ENCODE measurements at regions of chr22 and their contacts with region 1.

Region 1: GRCh38 chr22:17258015-17258787 is 39.0 kb upstream of the ADA2 start:
- DNase-seq: peak; percentile 98
- ATAC-seq: peak; percentile 96
- H3K4me3 ChIP-seq: 0 out of 2 replicates have a peak overlapping the region, but pooled peaks have one; percentile 28
- H3K27ac ChIP-seq: peak overlapping the region; percentile 81
- H3K4me1 ChIP-seq: peaks cover 24% of the 10 kb centered on the region
- H3K27me3 ChIP-seq: no peaks in the 10 kb centered on the region
- CTCF ChIP-seq: no peak
- EP300 ChIP-seq: peak; percentile 83 to 92
- POLR2A ChIP-seq: no peak
- RAD21 ChIP-seq: peak; percentile 6; the same call in 1 of the 2 replicates

Region 2: DNA sequence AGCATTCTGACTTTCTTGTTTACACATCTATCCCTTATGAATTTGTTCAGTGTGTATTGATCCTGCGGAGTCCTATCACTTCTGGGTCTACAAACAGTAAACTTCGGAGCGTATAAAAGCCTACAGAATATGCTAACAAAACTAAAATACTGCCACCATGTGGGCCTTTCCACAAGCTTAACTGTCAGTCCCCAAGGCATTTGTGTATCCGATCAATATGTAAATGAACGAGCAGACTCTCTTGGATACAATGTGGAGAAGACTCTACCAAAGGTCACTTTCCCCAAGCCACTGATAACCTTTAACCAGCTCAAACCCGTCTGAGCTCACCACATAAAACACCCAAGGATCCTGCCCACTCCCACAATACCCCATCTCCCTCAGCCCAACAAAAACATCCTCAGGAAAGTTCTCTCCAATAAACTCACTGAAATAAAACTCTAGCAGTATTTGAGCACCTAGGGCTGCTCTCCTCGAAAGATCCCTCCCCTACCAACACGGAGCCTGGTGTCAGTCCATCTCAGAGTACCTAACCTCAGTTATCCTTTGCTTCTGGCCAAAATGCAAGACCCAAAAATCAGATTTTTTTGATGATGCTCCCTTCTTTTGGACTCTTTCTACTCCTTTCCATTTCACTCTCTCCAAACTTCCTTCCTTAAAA is 56.8 kb before region 1 on chr22:
- CTCF ChIA-PET with region 1: interaction called, 12 read pairs
- POLR2A ChIA-PET with region 1: no interaction called
- RAD21 ChIA-PET with region 1: interaction called, 9 read pairs
- SMC1A ChIA-PET with region 1: interaction called, 5 read pairs
- in situ Hi-C with region 1: no loop called
- intact Hi-C with region 1: no loop called
- DNase-seq: no peak
- ATAC-seq: no peak
- H3K4me3 ChIP-seq: no peak overlapping the region
- H3K27ac ChIP-seq: no peak overlapping the region
- H3K4me1 ChIP-seq: no peaks in the 10 kb centered on the region
- H3K27me3 ChIP-seq: no peaks in the 10 kb centered on the region
- CTCF ChIP-seq: no peak
- EP300 ChIP-seq: no peak
- POLR2A ChIP-seq: no peak
- RAD21 ChIP-seq: no peak

Region 3: GRCh38 chr22:17228725-17229126 is 29.5 kb before region 1 on chr22:
- CTCF ChIA-PET with region 1: no interaction called
- POLR2A ChIA-PET with region 1: no interaction called
- RAD21 ChIA-PET with region 1: no interaction called
- SMC1A ChIA-PET with region 1: interaction called, 10 read pairs
- in situ Hi-C with region 1: no loop called
- intact Hi-C with region 1: no loop called
- DNase-seq: no peak
- ATAC-seq: peak; percentile 72
- H3K4me3 ChIP-seq: no peak overlapping the region
- H3K27ac ChIP-seq: no peak overlapping the region
- H3K4me1 ChIP-seq: peaks cover 4% of the 10 kb centered on the region; the same call in 1 of the 2 replicates
- H3K27me3 ChIP-seq: no peaks in the 10 kb centered on the region
- CTCF ChIP-seq: no peak
- EP300 ChIP-seq: no peak
- POLR2A ChIP-seq: no peak
- RAD21 ChIP-seq: no peak

Region 4: DNA sequence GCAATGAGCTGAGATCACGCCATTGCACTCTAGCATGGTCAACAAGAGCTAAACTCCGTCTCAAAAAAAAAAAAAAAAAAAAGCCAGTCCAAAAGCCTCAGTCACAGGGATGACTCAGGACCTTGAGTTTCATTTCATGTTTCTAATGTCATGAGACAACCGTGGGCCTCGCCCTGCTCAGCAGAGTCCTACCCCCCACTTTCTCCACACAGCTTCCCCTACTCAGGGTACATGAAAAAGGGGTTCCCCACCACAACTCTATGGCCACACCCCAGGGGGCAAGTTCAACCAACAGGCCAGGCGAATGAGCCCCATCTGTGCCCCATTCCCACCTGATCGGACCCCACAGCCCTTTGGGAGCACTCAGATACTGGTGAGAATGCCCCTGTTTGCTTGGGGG is 14.7 kb before region 1 on chr22:
- CTCF ChIA-PET with region 1: interaction called, 10 read pairs
- POLR2A ChIA-PET with region 1: interaction called, 16 read pairs
- RAD21 ChIA-PET with region 1: interaction called, 19 read pairs
- SMC1A ChIA-PET with region 1: interaction called, 19 read pairs
- in situ Hi-C with region 1: no loop called
- intact Hi-C with region 1: loop called (anchors 1 kb)
- DNase-seq: peak; percentile 84
- ATAC-seq: peak; percentile 97
- H3K4me3 ChIP-seq: no peak overlapping the region
- H3K27ac ChIP-seq: peak overlapping the region; percentile 97
- H3K4me1 ChIP-seq: peaks cover 24% of the 10 kb centered on the region
- H3K27me3 ChIP-seq: no peaks in the 10 kb centered on the region
- CTCF ChIP-seq: no peak
- EP300 ChIP-seq: peak in 1 of 2 experiments; percentile 66; a peak in 2 of 4 replicates
- POLR2A ChIP-seq: 0 out of 2 replicates have a peak, but pooled peaks have one; percentile 34
- RAD21 ChIP-seq: no peak